IMR-90 (cell line): ENCODE measurements at regions of chr4 and their contacts with region 1.

Region 1: DNA sequence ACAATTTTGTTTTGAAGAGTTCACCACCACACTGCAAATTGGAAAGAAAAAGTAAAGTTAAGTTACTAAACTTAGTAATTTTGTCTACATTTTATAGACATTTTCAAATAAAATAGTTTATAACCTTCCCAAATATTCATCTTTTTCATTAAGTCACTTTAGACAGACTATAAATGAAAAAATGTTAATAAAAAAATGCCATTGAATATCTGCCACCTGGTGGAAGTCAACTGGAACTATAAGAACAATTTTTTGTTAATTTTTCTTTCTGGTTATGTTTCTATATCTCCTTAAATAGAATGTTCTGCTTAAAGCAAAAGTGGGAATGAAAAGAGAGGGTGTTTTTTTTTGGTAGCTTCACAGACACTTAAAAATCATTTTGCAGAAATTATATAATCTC is 534.4 kb upstream of the PCDH10 start:
- DNase-seq: peak; percentile 5
- ATAC-seq: no peak
- H3K4me3 ChIP-seq: no peak overlapping the region
- H3K27ac ChIP-seq: no peak overlapping the region
- H3K4me1 ChIP-seq: no peaks in the 10 kb centered on the region
- H3K27me3 ChIP-seq: no peaks in the 10 kb centered on the region
- CTCF ChIP-seq: peak; percentile 42
- POLR2A ChIP-seq: no peak
- RAD21 ChIP-seq: 0 out of 2 replicates have a peak, but pooled peaks have one; percentile 27

Region 2: DNA sequence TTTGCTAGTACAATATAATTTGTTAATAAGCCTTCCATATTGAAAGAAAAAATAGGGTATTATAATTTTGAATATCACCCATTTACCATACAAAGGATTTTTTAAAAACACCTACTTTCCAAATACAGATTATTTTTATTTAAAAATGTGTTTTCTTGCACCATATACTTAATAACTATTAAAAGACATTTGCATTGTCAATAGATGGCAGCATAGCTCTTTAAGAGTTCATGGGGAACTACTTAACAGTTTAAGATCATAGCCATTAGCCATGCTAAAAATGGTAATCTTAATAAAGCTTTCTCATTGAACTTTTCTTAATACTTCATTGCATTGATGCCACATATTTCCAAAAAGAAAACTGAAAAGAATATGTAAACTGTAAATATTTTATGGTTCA is 1522.8 kb before region 1 on chr4:
- CTCF ChIA-PET with region 1: no interaction called
- POLR2A ChIA-PET with region 1: no interaction called
- dilution Hi-C with region 1: no loop called
- in situ Hi-C with region 1: no loop called
- intact Hi-C with region 1: loop called (anchors 10 kb)
- DNase-seq: peak; percentile 4
- ATAC-seq: no peak
- H3K4me3 ChIP-seq: no peak overlapping the region
- H3K27ac ChIP-seq: no peak overlapping the region
- H3K4me1 ChIP-seq: no peaks in the 10 kb centered on the region
- H3K27me3 ChIP-seq: no peaks in the 10 kb centered on the region
- CTCF ChIP-seq: peak; percentile 34; the same call in 1 of the 2 replicates
- POLR2A ChIP-seq: no peak
- RAD21 ChIP-seq: peak; percentile 45; the same call in 1 of the 2 replicates

Region 3: GRCh38 chr4:131989576-131989975 is 625.1 kb before region 1 on chr4:
- CTCF ChIA-PET with region 1: no interaction called
- POLR2A ChIA-PET with region 1: no interaction called
- dilution Hi-C with region 1: no loop called
- in situ Hi-C with region 1: no loop called
- intact Hi-C with region 1: loop called (anchors 10 kb)
- DNase-seq: no peak
- ATAC-seq: no peak
- H3K4me3 ChIP-seq: no peak overlapping the region
- H3K27ac ChIP-seq: no peak overlapping the region
- H3K4me1 ChIP-seq: no peaks in the 10 kb centered on the region
- H3K27me3 ChIP-seq: no peaks in the 10 kb centered on the region
- CTCF ChIP-seq: no peak
- POLR2A ChIP-seq: no peak
- RAD21 ChIP-seq: no peak